ENCODE measurements at regions of chr17 and their contacts with region 1.

Region 1: GRCh38 chr17:28763804-28764266 is 20.0 kb downstream of the TRAF4 start:
- DNase-seq: peak; percentile 84
- H3K4me3 Mint-ChIP-seq: no peak overlapping the region
- H3K27ac Mint-ChIP-seq: peak overlapping the region; percentile 73
- H3K4me1 Mint-ChIP-seq: peaks cover 23% of the 10 kb centered on the region
- H3K27me3 Mint-ChIP-seq: no peaks in the 10 kb centered on the region

Region 2: GRCh38 chr17:28834420-28834819 is 70.6 kb after region 1 on chr17:
- CTCF ChIA-PET with region 1: interaction called, 16 read pairs
- POLR2A ChIA-PET with region 1: no interaction called
- intact Hi-C with region 1: no loop called
- DNase-seq: no peak
- H3K4me3 Mint-ChIP-seq: no peak overlapping the region
- H3K27ac Mint-ChIP-seq: no peak overlapping the region
- H3K4me1 Mint-ChIP-seq: peaks cover 13% of the 10 kb centered on the region
- H3K27me3 Mint-ChIP-seq: no peaks in the 10 kb centered on the region

Region 3: DNA sequence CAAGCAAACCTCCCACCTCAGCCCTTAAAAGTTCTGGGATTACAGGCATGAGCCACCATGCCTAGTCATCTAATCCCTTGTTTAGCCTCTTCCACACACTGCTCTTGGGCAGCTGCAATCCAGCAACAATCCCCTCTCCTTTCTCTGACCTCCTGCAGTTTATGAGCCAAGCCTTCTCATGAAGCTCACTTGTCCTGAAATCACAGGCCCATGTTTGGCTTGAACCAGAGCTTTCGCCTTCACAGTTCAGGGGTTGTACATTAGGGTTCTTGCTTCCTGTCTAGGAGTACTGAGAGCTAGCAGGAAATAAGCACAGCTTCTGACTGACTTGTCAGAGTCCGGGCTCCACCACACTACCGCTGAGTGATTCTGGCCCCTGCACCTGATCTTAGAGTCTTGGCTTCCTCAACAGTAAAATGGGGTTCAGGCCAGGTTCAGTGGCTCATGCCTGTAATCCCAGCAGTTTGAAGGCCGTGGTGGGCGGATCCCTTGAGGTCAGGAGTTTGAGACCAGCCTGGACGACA is 107.3 kb after region 1 on chr17:
- CTCF ChIA-PET with region 1: interaction called, 13 read pairs
- POLR2A ChIA-PET with region 1: no interaction called
- intact Hi-C with region 1: no loop called
- DNase-seq: peak; percentile 79
- H3K4me3 Mint-ChIP-seq: no peak overlapping the region
- H3K27ac Mint-ChIP-seq: peak overlapping the region; percentile 80
- H3K4me1 Mint-ChIP-seq: peaks cover 19% of the 10 kb centered on the region
- H3K27me3 Mint-ChIP-seq: no peaks in the 10 kb centered on the region

Region 4: DNA sequence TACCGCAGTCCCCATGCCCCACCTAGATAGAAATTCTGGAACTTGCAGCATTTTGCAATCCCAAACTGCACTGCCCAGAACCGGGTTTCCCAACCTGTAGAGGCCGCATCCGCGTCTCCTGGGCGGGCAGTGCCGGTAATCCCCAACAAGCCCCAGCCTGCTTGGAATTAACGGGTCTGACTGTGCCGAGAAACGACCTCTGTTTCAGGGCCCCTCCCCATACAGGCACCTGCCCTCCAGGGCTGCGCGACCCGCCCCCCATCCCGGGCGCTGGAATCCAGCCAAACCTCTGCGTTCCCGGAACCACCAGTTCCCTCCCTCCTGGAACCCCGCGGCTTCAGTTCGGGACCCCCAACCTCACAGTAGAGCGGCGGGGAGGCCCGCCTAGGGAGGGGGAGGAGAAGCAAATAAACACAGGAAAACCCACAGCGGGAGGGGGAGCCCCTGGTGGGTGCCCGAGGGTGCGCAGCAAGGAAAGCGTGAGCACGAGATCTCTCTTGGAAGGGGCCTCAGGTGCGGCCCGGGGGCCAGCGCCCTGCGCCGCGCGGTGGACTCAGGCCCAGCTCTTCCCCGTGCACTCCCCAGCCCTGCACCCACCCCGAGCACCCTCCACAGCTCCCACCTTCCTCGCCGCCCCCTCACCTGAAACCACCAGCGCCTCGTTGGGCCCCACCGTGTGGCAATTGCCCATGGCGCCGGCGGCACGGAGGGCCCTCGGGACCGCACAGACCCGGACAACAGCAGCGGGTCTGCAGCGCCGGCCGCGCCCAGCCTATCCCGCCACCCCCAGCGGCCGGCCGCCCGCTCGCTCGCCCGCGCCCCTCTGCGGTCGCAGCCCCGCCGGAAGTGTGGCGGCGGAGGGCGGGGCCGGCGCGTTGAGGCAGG is 133.3 kb after region 1 on chr17 and contains the start of gene FLOT2:
- CTCF ChIA-PET with region 1: interaction called, 22 read pairs
- POLR2A ChIA-PET with region 1: interaction called, 7 read pairs
- intact Hi-C with region 1: loop called (anchors 5 kb)
- DNase-seq: peak; percentile 81
- H3K4me3 Mint-ChIP-seq: peak within 1 kb of the TSS; percentile 97
- H3K27ac Mint-ChIP-seq: peak within 1 kb of the TSS; percentile 92
- H3K4me1 Mint-ChIP-seq: peaks cover 64% of the 10 kb centered on the region
- H3K27me3 Mint-ChIP-seq: no peaks in the 10 kb centered on the region
- total RNA-seq, gene FLOT2: 110 to 118 TPM

Region 5: GRCh38 chr17:28916302-28916934 is 152.6 kb after region 1 on chr17:
- CTCF ChIA-PET with region 1: interaction called, 33 read pairs
- POLR2A ChIA-PET with region 1: no interaction called
- intact Hi-C with region 1: loop called (anchors 2 kb)
- DNase-seq: peak; percentile 56
- H3K4me3 Mint-ChIP-seq: no peak overlapping the region
- H3K27ac Mint-ChIP-seq: no peak overlapping the region
- H3K4me1 Mint-ChIP-seq: peaks cover 14% of the 10 kb centered on the region
- H3K27me3 Mint-ChIP-seq: no peaks in the 10 kb centered on the region